K562 (cell line): ENCODE measurements at regions of chr7 and their contacts with region 1.

Region 1: GRCh38 chr7:100132697-100133151 is 6.0 kb downstream of the MBLAC1 start:
- DNase-seq: peak; percentile 76 to 87 (median 84)
- ATAC-seq: peak; percentile 93
- H3K4me3 ChIP-seq: no peak overlapping the region
- H3K27ac ChIP-seq: no peak overlapping the region
- H3K4me1 ChIP-seq: peaks cover 10% of the 10 kb centered on the region in 2 experiments
- H3K27me3 ChIP-seq: no peaks in the 10 kb centered on the region; a peak in 2 of 5 replicates
- CTCF ChIP-seq: peak; percentile 98 to 99 (median 98)
- EP300 ChIP-seq: no peak
- POLR2A ChIP-seq: no peak
- RAD21 ChIP-seq: peak; percentile 99

Region 2: GRCh38 chr7:99918959-99919813 is 213.5 kb before region 1 on chr7 and contains the start of gene TRIM4:
- CTCF ChIA-PET with region 1: interaction called, 26 read pairs
- POLR2A ChIA-PET with region 1: no interaction called
- in situ Hi-C with region 1: loop called (anchors 5 kb)
- intact Hi-C with region 1: loop called (anchors 2 kb)
- DNase-seq: peak; percentile 96 to 97 (median 96)
- ATAC-seq: peak; percentile 99
- H3K4me3 ChIP-seq: peak within 1 kb of the TSS; percentile 86
- H3K27ac ChIP-seq: peak within 1 kb of the TSS; percentile 81
- H3K4me1 ChIP-seq: peaks cover 13 to 18% of the 10 kb centered on the region in 2 experiments; a peak in 4 of 5 replicates
- H3K27me3 ChIP-seq: no peaks in the 10 kb centered on the region
- CTCF ChIP-seq: peak; percentile 50 to 70 (median 53)
- EP300 ChIP-seq: no peak; the same call in none of the 2 replicates
- POLR2A ChIP-seq: peak; percentile 93
- RAD21 ChIP-seq: peak in 1 of 2 experiments; percentile 36; a peak in 3 of 4 replicates
- polyA plus RNA-seq, gene TRIM4: 6.2 to 6.5 TPM

Region 3: GRCh38 chr7:99997545-99998137 is 135.1 kb before region 1 on chr7:
- CTCF ChIA-PET with region 1: interaction called, 12 read pairs
- POLR2A ChIA-PET with region 1: interaction called, 4 read pairs
- in situ Hi-C with region 1: loop called (anchors 5 kb)
- intact Hi-C with region 1: loop called (anchors 1 kb)
- DNase-seq: no peak
- ATAC-seq: no peak
- H3K4me3 ChIP-seq: no peak overlapping the region
- H3K27ac ChIP-seq: no peak overlapping the region
- H3K4me1 ChIP-seq: peaks cover 2 to 13% of the 10 kb centered on the region in 2 experiments; a peak in 3 of 5 replicates
- H3K27me3 ChIP-seq: peaks cover 25 to 40% of the 10 kb centered on the region in 2 experiments; a peak in 4 of 5 replicates
- CTCF ChIP-seq: no peak
- EP300 ChIP-seq: no peak
- POLR2A ChIP-seq: no peak
- RAD21 ChIP-seq: no peak

Region 4: GRCh38 chr7:100190048-100190711 is 57.5 kb after region 1 on chr7:
- CTCF ChIA-PET with region 1: no interaction called
- POLR2A ChIA-PET with region 1: no interaction called
- in situ Hi-C with region 1: no loop called
- intact Hi-C with region 1: loop called (anchors 2 kb)
- DNase-seq: peak; percentile 48 to 76 (median 52)
- ATAC-seq: peak; percentile 90
- H3K4me3 ChIP-seq: no peak overlapping the region
- H3K27ac ChIP-seq: no peak overlapping the region
- H3K4me1 ChIP-seq: peaks cover 0 to 11% of the 10 kb centered on the region in 2 experiments; a peak in 3 of 5 replicates
- H3K27me3 ChIP-seq: no peaks in the 10 kb centered on the region
- CTCF ChIP-seq: peak; percentile 65 to 80 (median 73); a peak in 5 of 6 replicates
- EP300 ChIP-seq: peak; percentile 57; the same call in 1 of the 2 replicates
- POLR2A ChIP-seq: no peak
- RAD21 ChIP-seq: peak; percentile 78 to 83

Region 5: DNA sequence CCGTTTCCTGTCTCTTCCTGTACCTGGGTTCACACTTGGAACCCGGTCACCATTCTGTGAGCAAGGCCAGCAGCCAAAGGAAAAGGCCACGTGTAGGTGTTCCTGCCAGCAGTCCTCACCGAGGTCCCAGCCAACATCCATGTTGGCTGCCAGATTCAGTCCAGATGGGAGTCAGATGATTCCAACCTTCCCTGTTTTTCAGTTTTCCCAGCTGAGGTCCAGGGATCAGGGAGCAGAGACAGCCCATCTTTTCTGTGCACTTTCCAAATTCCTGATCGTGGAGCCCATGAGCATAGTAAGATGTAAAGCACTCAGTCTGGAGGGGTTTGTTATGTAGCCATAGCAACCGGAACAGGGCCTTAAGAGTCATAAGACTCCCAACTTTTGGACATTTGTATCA is 83.2 kb after region 1 on chr7:
- CTCF ChIA-PET with region 1: interaction called, 54 read pairs
- POLR2A ChIA-PET with region 1: interaction called, 3 read pairs
- in situ Hi-C with region 1: loop called (anchors 5 kb)
- intact Hi-C with region 1: loop called (anchors 1 kb)
- DNase-seq: no peak
- ATAC-seq: no peak
- H3K4me3 ChIP-seq: no peak overlapping the region
- H3K27ac ChIP-seq: no peak overlapping the region
- H3K4me1 ChIP-seq: peaks cover 4 to 15% of the 10 kb centered on the region in 2 experiments; a peak in 4 of 5 replicates
- H3K27me3 ChIP-seq: no peaks in the 10 kb centered on the region
- CTCF ChIP-seq: no peak
- EP300 ChIP-seq: no peak
- POLR2A ChIP-seq: no peak
- RAD21 ChIP-seq: no peak

Region 6: DNA sequence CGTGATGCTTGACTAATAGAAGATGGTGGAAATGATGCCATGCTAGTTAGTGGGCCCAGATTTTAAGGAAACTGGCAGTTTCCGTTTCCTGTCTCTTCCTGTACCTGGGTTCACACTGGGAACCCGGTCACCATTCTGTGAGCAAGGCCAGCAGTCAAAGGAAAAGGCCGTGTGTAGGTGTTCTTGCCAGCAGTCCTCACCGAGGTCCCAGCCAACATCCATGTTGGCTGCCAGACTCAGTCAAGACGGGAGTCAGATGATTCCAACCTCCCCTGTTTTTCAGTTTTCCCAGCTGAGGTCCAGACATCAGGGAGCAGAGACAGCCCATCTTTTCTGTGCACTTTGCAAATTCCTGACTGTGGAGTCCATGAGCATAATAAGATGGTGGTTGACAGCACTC is 210.0 kb after region 1 on chr7:
- CTCF ChIA-PET with region 1: interaction called, 6 read pairs
- POLR2A ChIA-PET with region 1: no interaction called
- in situ Hi-C with region 1: loop called (anchors 5 kb)
- intact Hi-C with region 1: loop called (anchors 1 kb)
- DNase-seq: no peak
- ATAC-seq: no peak
- H3K4me3 ChIP-seq: no peak overlapping the region
- H3K27ac ChIP-seq: peak overlapping the region; percentile 34; the same call in 1 of the 3 replicates
- H3K4me1 ChIP-seq: peaks cover 9 to 13% of the 10 kb centered on the region in 2 experiments; a peak in 4 of 5 replicates
- H3K27me3 ChIP-seq: no peaks in the 10 kb centered on the region
- CTCF ChIP-seq: no peak
- EP300 ChIP-seq: no peak
- POLR2A ChIP-seq: no peak
- RAD21 ChIP-seq: no peak